HCT116 (cell line): ENCODE measurements at regions of chr14 and their contacts with region 1.

Region 1: DNA sequence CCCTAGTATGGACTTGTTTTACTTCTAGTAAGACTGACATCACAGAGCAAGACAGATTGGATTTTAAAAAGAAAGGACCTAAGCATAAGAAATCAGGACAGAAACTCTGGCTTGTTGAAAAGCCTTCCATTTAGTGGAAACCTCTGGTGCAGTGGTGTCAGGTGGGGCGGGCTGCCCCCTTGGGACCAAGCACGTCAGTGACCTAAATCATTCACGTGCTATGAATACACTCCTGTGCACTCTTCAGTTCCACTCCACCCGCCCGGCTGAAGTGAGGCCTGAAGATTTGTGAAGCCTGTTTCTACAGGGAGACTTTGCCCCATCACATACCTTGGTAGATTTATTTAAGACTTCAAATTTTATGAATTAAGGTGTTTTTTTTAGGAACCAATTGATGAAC is 58.2 kb upstream of the STRN3 start:
- DNase-seq: no peak
- ATAC-seq: peak; percentile 47; the same call in 1 of the 2 replicates
- H3K4me3 ChIP-seq: no peak overlapping the region
- H3K27ac ChIP-seq: no peak overlapping the region
- H3K4me1 ChIP-seq: peaks cover 10 to 13% of the 10 kb centered on the region in 2 experiments
- H3K27me3 ChIP-seq: no peaks in the 10 kb centered on the region
- CTCF ChIP-seq: peak in 1 of 3 experiments; percentile 11; a peak in 1 of 6 replicates
- POLR2A ChIP-seq: no peak
- RAD21 ChIP-seq: no peak

Region 2: GRCh38 chr14:30656190-30656632 is 428.2 kb before region 1 on chr14:
- CTCF ChIA-PET with region 1: no interaction called
- POLR2A ChIA-PET with region 1: no interaction called
- RAD21 ChIA-PET with region 1: no interaction called
- intact Hi-C with region 1: loop called (anchors 5 kb)
- DNase-seq: peak; percentile 15
- ATAC-seq: peak; percentile 82
- H3K4me3 ChIP-seq: no peak overlapping the region
- H3K27ac ChIP-seq: no peak overlapping the region
- H3K4me1 ChIP-seq: no peaks in the 10 kb centered on the region
- H3K27me3 ChIP-seq: no peaks in the 10 kb centered on the region
- CTCF ChIP-seq: peak; percentile 37 to 85 (median 80); a peak in 5 of 6 replicates
- POLR2A ChIP-seq: no peak
- RAD21 ChIP-seq: peak; percentile 40; the same call in 1 of the 2 replicates

Region 3: GRCh38 chr14:30849354-30849753 is 235.0 kb before region 1 on chr14:
- CTCF ChIA-PET with region 1: no interaction called
- POLR2A ChIA-PET with region 1: no interaction called
- RAD21 ChIA-PET with region 1: no interaction called
- intact Hi-C with region 1: no loop called
- DNase-seq: no peak
- ATAC-seq: no peak
- H3K4me3 ChIP-seq: no peak overlapping the region
- H3K27ac ChIP-seq: no peak overlapping the region
- H3K4me1 ChIP-seq: no peaks in the 10 kb centered on the region
- H3K27me3 ChIP-seq: no peaks in the 10 kb centered on the region
- CTCF ChIP-seq: no peak
- POLR2A ChIP-seq: no peak
- RAD21 ChIP-seq: no peak

Region 4: GRCh38 chr14:30980980-30981379 is 103.4 kb before region 1 on chr14:
- CTCF ChIA-PET with region 1: interaction called, 7 read pairs
- POLR2A ChIA-PET with region 1: no interaction called
- RAD21 ChIA-PET with region 1: no interaction called
- intact Hi-C with region 1: loop called (anchors 1 kb)
- DNase-seq: no peak
- ATAC-seq: no peak
- H3K4me3 ChIP-seq: no peak overlapping the region
- H3K27ac ChIP-seq: peak overlapping the region; percentile 44; the same call in 1 of the 2 replicates
- H3K4me1 ChIP-seq: peaks cover 17 to 28% of the 10 kb centered on the region in 2 experiments
- H3K27me3 ChIP-seq: no peaks in the 10 kb centered on the region
- CTCF ChIP-seq: no peak
- POLR2A ChIP-seq: no peak
- RAD21 ChIP-seq: no peak

Region 5: DNA sequence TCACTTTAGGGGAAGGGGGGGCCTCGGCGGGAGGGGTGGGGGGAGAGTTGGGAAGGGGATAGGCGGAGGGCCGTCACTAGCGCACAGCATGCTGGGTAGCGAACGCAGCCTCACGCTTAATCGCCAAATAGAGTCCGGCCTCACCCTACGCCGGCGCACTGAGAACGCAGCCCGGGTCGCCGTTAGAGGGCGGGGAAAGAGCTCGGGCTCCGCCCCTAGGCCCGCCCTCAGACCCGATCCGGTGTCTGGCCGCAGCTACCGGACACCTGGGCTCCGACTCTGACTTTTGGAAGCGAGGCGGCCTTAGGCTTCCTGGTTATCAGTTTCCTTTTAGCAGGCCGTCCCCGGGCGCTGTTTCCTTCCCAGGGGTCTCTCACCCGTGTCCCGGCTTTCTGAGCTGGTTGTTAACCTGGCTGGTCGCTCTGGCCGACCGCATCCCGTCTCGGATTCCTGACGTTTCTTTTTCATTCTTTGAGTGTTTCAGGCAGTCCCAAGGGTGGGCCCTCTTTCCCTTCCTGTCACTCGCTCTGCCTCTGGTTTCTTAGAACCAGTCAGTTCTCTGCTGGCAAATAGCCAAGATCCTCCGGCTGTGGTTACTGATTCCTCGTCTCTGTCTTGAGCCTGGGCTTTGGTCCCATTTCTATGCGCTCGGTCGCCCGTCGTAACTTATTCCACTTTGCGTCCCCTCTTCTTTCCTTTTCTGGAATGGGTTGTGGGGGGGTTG is 57.8 kb before region 1 on chr14:
- CTCF ChIA-PET with region 1: no interaction called
- POLR2A ChIA-PET with region 1: interaction called, 5 read pairs
- RAD21 ChIA-PET with region 1: no interaction called
- intact Hi-C with region 1: loop called (anchors 2 kb)
- DNase-seq: peak; percentile 92
- ATAC-seq: peak; percentile 92
- H3K4me3 ChIP-seq: peak overlapping the region; percentile 80 to 91
- H3K27ac ChIP-seq: peak overlapping the region; percentile 97
- H3K4me1 ChIP-seq: peaks cover 48 to 54% of the 10 kb centered on the region in 2 experiments
- H3K27me3 ChIP-seq: no peaks in the 10 kb centered on the region
- CTCF ChIP-seq: no peak
- POLR2A ChIP-seq: peak; percentile 22
- RAD21 ChIP-seq: no peak

Region 6: GRCh38 chr14:31137214-31137889 is 53.0 kb after region 1 on chr14:
- CTCF ChIA-PET with region 1: no interaction called
- POLR2A ChIA-PET with region 1: no interaction called
- RAD21 ChIA-PET with region 1: no interaction called
- intact Hi-C with region 1: no loop called
- DNase-seq: peak; percentile 68
- ATAC-seq: peak; percentile 98
- H3K4me3 ChIP-seq: 0 out of 4 replicates have a peak overlapping the region, but pooled peaks of 1 of the 2 experiments have one; percentile 9
- H3K27ac ChIP-seq: peak overlapping the region; percentile 31
- H3K4me1 ChIP-seq: peaks cover 9 to 22% of the 10 kb centered on the region in 2 experiments
- H3K27me3 ChIP-seq: no peaks in the 10 kb centered on the region
- CTCF ChIP-seq: no peak
- POLR2A ChIP-seq: no peak
- RAD21 ChIP-seq: no peak; the same call in 1 of the 2 replicates

Region 7: DNA sequence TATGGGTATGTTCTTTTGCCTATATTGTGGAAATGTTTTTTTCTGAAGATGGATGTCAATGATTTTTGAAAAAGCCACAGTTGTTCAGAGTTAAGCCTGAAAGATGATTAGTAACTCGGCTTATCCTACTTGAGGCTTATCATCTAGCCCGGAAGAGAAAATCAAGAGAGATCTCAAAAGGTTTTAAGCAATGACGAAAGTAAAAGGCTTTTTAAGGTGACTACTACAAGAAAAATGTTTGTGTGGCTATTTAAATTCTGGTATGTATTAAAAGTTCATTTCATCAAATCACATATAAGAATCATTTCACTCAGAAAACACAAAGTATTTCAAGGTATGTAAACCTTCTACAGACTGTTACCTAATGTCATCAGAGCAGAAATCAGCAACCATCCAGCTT is 295.7 kb after region 1 on chr14:
- CTCF ChIA-PET with region 1: no interaction called
- POLR2A ChIA-PET with region 1: no interaction called
- RAD21 ChIA-PET with region 1: no interaction called
- intact Hi-C with region 1: no loop called
- DNase-seq: no peak
- ATAC-seq: no peak
- H3K4me3 ChIP-seq: no peak overlapping the region
- H3K27ac ChIP-seq: no peak overlapping the region
- H3K4me1 ChIP-seq: peaks cover 6 to 7% of the 10 kb centered on the region in 2 experiments; a peak in 3 of 4 replicates
- H3K27me3 ChIP-seq: no peaks in the 10 kb centered on the region
- CTCF ChIP-seq: no peak
- POLR2A ChIP-seq: no peak
- RAD21 ChIP-seq: no peak